ENCODE measurements at regions of chr7 and their contacts with region 1.

Region 1: DNA sequence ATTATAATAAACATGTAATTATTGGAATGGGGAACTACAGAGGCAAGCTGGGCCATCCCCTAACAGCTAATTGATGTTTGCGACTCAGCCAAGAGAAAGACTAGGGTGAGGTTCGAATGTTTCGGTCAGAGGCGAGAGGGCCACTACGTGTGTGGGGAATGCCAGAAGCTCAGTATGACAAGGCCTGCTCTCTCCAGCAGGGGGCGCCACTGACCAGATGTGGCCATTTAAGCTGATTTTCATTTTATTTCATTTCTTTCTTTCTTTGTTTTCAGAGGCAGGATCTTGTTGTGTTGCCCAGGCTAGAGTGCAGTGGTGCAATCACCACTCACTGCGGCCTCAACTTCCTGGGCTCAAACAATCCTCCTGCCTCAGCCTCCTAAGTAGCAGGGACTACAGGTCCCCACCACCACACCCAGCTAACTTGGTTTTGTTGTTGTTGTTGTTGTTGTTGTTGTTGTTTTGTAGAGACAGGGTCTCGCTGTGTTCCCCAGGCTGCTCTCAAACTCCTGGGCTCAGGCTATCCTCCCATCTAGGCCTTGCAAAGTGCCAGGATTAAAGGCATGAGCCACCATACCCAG is 38.1 kb downstream of the TMEM130 start:
- DNase-seq: peak; percentile 69
- H3K4me3 ChIP-seq: no peak overlapping the region; a peak in 1 of 4 replicates
- H3K27ac ChIP-seq: no peak overlapping the region
- H3K4me1 ChIP-seq: peaks cover 0 to 10% of the 10 kb centered on the region in 2 experiments; a peak in 1 of 4 replicates
- H3K27me3 ChIP-seq: peaks cover 8% of the 10 kb centered on the region
- CTCF ChIP-seq: peak; percentile 73
- EP300 ChIP-seq: no peak
- RAD21 ChIP-seq: peak; percentile 49

Region 2: GRCh38 chr7:98802088-98802780 is 29.5 kb before region 1 on chr7:
- CTCF ChIA-PET with region 1: interaction called, 20 read pairs
- POLR2A ChIA-PET with region 1: interaction called, 4 read pairs
- DNase-seq: peak; percentile 91
- H3K4me3 ChIP-seq: no peak overlapping the region
- H3K27ac ChIP-seq: peak overlapping the region in 1 of 2 experiments; percentile 45; a peak in 2 of 4 replicates
- H3K4me1 ChIP-seq: peaks cover 0 to 12% of the 10 kb centered on the region in 2 experiments; a peak in 1 of 4 replicates
- H3K27me3 ChIP-seq: no peaks in the 10 kb centered on the region
- CTCF ChIP-seq: no peak
- EP300 ChIP-seq: peak in 1 of 2 experiments; percentile 68; a peak in 1 of 4 replicates
- RAD21 ChIP-seq: peak; percentile 3; the same call in 1 of the 2 replicates

Region 3: DNA sequence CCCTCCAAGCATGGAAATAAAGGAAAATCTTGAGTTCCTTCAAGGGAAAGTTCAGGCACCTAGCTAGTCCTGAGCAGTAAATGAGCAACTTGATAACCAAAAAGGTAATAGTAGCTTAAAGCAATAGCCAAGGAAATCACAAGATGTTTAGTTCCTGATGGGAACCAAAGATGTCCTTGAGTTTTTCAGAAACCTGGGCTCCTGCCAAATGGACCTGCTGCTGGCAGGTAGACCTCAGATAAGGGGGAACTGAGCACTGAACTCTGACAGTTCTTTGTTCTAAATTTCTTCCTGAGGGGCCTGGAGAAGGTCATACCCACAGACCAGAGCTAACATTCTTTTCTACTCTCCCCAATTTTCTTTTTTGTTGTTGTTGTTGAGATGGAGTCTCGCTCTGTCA is 10.4 kb before region 1 on chr7:
- CTCF ChIA-PET with region 1: interaction called, 28 read pairs
- POLR2A ChIA-PET with region 1: no interaction called
- DNase-seq: no peak
- H3K4me3 ChIP-seq: no peak overlapping the region
- H3K27ac ChIP-seq: no peak overlapping the region
- H3K4me1 ChIP-seq: peaks cover 0 to 4% of the 10 kb centered on the region in 2 experiments; a peak in 1 of 4 replicates
- H3K27me3 ChIP-seq: no peaks in the 10 kb centered on the region
- CTCF ChIP-seq: no peak
- EP300 ChIP-seq: no peak
- RAD21 ChIP-seq: no peak